WTC11 (cell line): ENCODE measurements at regions of chr1 and their contacts with region 1.

Region 1: DNA sequence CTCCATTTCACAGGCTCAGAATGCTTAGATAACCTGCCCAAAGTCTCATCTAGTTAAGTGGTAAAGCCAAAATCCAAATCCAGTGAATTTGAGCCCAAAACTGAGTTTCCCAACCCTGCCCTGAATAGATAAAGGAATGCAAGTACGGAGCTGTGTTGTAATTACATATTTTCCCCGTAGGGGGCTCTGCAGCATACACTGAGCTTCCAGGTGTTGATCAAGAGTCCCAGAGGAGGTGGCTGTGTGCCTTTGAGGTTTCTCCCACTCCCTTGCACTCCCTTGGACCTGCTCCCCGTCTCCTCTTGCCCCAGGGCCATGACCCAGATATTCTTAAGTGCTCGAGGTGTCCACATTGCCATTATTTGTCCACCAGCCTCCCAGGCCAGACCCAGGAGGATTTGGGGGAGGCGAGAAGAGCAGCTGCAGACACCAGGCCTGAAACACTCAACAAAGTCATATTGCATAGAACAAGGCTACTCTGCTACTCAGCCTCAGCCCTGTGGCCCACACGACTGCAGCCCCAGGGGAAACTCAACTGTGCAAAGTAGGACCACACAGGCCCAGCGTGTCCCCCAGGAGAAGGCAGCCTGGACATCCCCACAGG is 18.4 kb upstream of the LY9 start:
- DNase-seq: peak; percentile 57
- ATAC-seq: peak; percentile 81
- H3K4me3 Mint-ChIP-seq: no peak overlapping the region
- H3K27ac Mint-ChIP-seq: no peak overlapping the region
- H3K4me1 Mint-ChIP-seq: peaks cover 18% of the 10 kb centered on the region
- H3K27me3 Mint-ChIP-seq: peaks cover 4% of the 10 kb centered on the region
- CTCF ChIP-seq: peak; percentile 68

Region 2: DNA sequence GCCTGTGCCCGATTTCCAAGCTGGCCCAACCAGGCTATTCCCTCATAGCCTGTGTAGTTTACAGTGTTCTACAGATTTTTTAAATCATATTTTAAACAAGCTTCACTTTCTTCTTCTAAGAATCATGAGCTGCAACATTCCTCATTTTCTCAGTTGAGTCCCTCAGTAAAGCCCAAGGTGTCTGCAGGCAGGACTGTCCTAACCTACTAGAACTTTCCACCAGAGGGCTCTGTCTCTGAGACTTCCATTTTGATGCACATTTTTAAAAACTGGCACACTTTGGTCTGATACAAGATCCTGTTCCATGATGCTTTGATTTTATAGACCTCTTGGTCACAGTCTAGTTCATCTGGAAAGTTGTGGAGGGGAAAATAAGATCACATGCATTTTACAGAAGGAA is 232.9 kb before region 1 on chr1:
- CTCF ChIA-PET with region 1: no interaction called
- POLR2A ChIA-PET with region 1: no interaction called
- DNase-seq: no peak
- ATAC-seq: peak; percentile 74
- H3K4me3 Mint-ChIP-seq: no peak overlapping the region
- H3K27ac Mint-ChIP-seq: no peak overlapping the region
- H3K4me1 Mint-ChIP-seq: 0 out of 2 replicates have a peak, but pooled peaks cover 4% of the 10 kb centered on the region
- H3K27me3 Mint-ChIP-seq: peaks cover 3% of the 10 kb centered on the region; the same call in 1 of the 2 replicates
- CTCF ChIP-seq: no peak; the same call in 1 of the 2 replicates

Region 3: GRCh38 chr1:160675641-160676410 is 101.8 kb before region 1 on chr1:
- CTCF ChIA-PET with region 1: interaction called, 26 read pairs
- POLR2A ChIA-PET with region 1: no interaction called
- DNase-seq: peak; percentile 75
- ATAC-seq: peak; percentile 76
- H3K4me3 Mint-ChIP-seq: no peak overlapping the region
- H3K27ac Mint-ChIP-seq: no peak overlapping the region; the same call in 1 of the 2 replicates
- H3K4me1 Mint-ChIP-seq: peaks cover 10% of the 10 kb centered on the region
- H3K27me3 Mint-ChIP-seq: no peaks in the 10 kb centered on the region; the same call in 1 of the 2 replicates
- CTCF ChIP-seq: no peak

Region 4: GRCh38 chr1:160726498-160727315 is 50.9 kb before region 1 on chr1:
- CTCF ChIA-PET with region 1: interaction called, 16 read pairs
- POLR2A ChIA-PET with region 1: no interaction called
- DNase-seq: peak; percentile 69
- ATAC-seq: peak; percentile 86
- H3K4me3 Mint-ChIP-seq: no peak overlapping the region
- H3K27ac Mint-ChIP-seq: no peak overlapping the region
- H3K4me1 Mint-ChIP-seq: peaks cover 23% of the 10 kb centered on the region
- H3K27me3 Mint-ChIP-seq: no peaks in the 10 kb centered on the region; the same call in 1 of the 2 replicates
- CTCF ChIP-seq: peak; percentile 78

Region 5: GRCh38 chr1:160748181-160748877 is 29.3 kb before region 1 on chr1:
- CTCF ChIA-PET with region 1: interaction called, 20 read pairs
- POLR2A ChIA-PET with region 1: no interaction called
- DNase-seq: no peak
- ATAC-seq: peak; percentile 59
- H3K4me3 Mint-ChIP-seq: no peak overlapping the region
- H3K27ac Mint-ChIP-seq: no peak overlapping the region
- H3K4me1 Mint-ChIP-seq: peaks cover 35% of the 10 kb centered on the region
- H3K27me3 Mint-ChIP-seq: peaks cover 16% of the 10 kb centered on the region
- CTCF ChIP-seq: no peak

Region 6: DNA sequence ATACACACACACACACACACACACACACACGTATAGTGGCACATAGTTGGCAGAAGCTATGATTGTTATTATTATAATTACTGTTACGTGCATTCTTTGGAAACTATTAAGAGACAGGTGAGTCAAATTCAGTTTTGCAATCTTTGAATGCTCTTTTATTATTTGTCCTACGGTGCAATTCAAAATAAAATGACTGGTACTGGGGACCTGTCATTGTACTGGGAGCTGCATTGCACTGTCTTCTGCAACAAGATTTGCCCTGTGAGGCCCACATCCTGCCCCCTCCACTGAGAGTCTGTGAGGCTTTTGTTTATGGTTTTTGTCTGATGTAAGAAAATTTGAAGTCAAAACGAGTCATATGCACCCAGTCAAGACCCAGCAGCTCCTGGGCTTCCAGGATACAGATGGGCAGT is 20.3 kb after region 1 on chr1:
- CTCF ChIA-PET with region 1: interaction called, 10 read pairs
- POLR2A ChIA-PET with region 1: no interaction called
- DNase-seq: no peak
- ATAC-seq: no peak
- H3K4me3 Mint-ChIP-seq: no peak overlapping the region
- H3K27ac Mint-ChIP-seq: no peak overlapping the region
- H3K4me1 Mint-ChIP-seq: no peaks in the 10 kb centered on the region
- H3K27me3 Mint-ChIP-seq: no peaks in the 10 kb centered on the region
- CTCF ChIP-seq: no peak

Region 7: GRCh38 chr1:160821628-160822027 is 44.0 kb after region 1 on chr1:
- CTCF ChIA-PET with region 1: interaction called, 17 read pairs
- POLR2A ChIA-PET with region 1: no interaction called
- DNase-seq: peak; percentile 61
- ATAC-seq: peak; percentile 80
- H3K4me3 Mint-ChIP-seq: no peak overlapping the region
- H3K27ac Mint-ChIP-seq: no peak overlapping the region
- H3K4me1 Mint-ChIP-seq: peaks cover 12% of the 10 kb centered on the region
- H3K27me3 Mint-ChIP-seq: no peaks in the 10 kb centered on the region
- CTCF ChIP-seq: peak; percentile 14; the same call in 1 of the 2 replicates

Region 8: DNA sequence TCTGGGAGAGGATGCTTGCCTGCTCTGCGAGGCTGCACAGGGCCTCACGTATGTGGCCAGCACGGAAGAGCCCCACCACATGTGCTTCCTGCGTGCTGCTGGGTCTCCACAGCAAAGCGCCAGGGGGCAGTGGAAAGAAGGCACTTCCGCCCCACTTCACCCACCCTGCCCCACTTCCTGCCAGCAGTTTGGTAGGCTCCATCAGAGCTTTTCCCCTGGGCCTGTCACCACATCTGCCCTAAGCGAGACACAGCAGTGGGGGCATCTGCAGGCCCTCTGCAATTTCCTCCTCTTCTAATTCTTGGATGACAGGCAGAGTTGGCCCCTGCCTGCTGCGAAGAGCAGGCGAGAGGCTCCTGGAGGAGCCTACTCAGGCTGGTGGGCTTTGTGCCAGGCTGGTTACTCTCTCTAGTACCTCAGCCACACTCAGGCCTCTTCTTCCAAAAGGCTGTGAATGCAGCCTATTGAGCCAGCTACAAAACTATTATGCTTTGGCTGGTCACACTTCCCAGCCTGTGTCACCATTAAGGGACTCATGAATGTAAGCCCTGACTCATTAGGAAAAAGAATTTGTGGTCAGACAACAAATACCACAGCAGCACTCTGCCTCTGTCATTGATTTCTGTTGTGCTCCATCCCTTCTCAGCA is 60.1 kb after region 1 on chr1:
- CTCF ChIA-PET with region 1: interaction called, 16 read pairs
- POLR2A ChIA-PET with region 1: no interaction called
- DNase-seq: no peak
- ATAC-seq: peak; percentile 46; the same call in 1 of the 2 replicates
- H3K4me3 Mint-ChIP-seq: no peak overlapping the region
- H3K27ac Mint-ChIP-seq: no peak overlapping the region
- H3K4me1 Mint-ChIP-seq: peaks cover 21% of the 10 kb centered on the region
- H3K27me3 Mint-ChIP-seq: no peaks in the 10 kb centered on the region; the same call in 1 of the 2 replicates
- CTCF ChIP-seq: no peak